ENCODE measurements at regions of chr12 and their contacts with region 1.

Region 1: GRCh38 chr12:102551186-102551585 is 70.8 kb upstream of the IGF1 start:
- DNase-seq: no peak
- ATAC-seq: no peak
- H3K4me3 ChIP-seq: no peak overlapping the region
- H3K27ac ChIP-seq: no peak overlapping the region
- H3K4me1 ChIP-seq: peaks cover 4% of the 10 kb centered on the region; the same call in 1 of the 3 replicates
- CTCF ChIP-seq: no peak
- EP300 ChIP-seq: no peak
- POLR2A ChIP-seq: no peak
- RAD21 ChIP-seq: no peak

Region 2: DNA sequence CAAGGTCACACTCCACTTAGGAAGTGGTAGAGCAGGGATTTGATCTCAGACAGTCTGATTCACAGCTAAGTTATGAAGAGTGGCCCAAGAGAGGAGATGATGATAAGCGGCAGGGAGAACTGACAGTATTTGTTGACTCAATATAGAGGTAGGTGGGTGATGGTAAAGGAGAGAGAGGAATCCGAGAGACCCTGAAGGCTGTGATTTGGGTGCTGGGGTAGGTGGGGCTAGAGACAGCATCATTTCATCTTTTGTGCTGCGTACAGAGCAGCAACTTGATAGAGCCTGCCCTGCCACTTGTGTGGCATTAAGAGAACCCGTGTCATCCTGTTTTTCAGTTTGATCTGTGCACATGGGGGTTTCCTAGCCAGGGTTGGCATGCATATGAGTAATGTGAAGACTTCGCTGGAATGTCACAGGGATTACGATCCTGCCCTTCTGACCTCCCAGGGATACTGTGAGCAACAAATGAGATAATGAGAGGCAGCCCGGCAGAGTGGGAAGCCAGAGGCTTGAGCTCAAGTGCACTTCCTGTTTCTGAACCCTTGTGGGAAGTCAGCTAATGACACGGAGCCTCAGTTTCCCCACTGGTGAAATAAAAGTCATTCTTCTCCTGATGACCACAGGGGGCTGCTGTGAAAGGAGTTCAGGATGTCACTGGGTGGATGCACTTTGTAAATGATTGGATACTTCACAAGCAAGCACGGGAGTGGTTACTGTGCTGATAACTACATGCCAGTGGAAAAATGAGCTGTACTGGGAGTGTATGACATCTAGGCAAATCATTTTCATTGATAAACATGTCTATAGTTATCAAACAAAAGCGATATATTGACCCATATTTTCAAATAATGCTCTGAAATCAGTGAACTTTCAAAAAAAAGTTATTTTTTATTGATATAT is 11.3 kb before region 1 on chr12:
- CTCF ChIA-PET with region 1: interaction called, 10 read pairs
- POLR2A ChIA-PET with region 1: interaction called, 3 read pairs
- DNase-seq: peak; percentile 74 to 96
- ATAC-seq: peak; percentile 94
- H3K4me3 ChIP-seq: no peak overlapping the region
- H3K27ac ChIP-seq: peak overlapping the region; percentile 87 to 97
- H3K4me1 ChIP-seq: peaks cover 40% of the 10 kb centered on the region
- CTCF ChIP-seq: no peak
- EP300 ChIP-seq: peak; percentile 66 to 92; a peak in 4 of 5 replicates
- POLR2A ChIP-seq: no peak
- RAD21 ChIP-seq: peak in 1 of 2 experiments; percentile 59; a peak in 3 of 5 replicates

Measured in A549 (cell line).